A673 (cell line): ENCODE measurements at regions of chr12 and their contacts with region 1.

Region 1: GRCh38 chr12:50055831-50056638 is 1.4 kb upstream of the ASIC1 start:
- DNase-seq: peak; percentile 59
- H3K4me3 ChIP-seq: peak overlapping the region; percentile 71
- H3K27ac ChIP-seq: no peak overlapping the region
- H3K4me1 ChIP-seq: peaks cover 21% of the 10 kb centered on the region
- H3K27me3 ChIP-seq: peaks cover 4% of the 10 kb centered on the region
- CTCF ChIP-seq: peak; percentile 98

Region 2: DNA sequence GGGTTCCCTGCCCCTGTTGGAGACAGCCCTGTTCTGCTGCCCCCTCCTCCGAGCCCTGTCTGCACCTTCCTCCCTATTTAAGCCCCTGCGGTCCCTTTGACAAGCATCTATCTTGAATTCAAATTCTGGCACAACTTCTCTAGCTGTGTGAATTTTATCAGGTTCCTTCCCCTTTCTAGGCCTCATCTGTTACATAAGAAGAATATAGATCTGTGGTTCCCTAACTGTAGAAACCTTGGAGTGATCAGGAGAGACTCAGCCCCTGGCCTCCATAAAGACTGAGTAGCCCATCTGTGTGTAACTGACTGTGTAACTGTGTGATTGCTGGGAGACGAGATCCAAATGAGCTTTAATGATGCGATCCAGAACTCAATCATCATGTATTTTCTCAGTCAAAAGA is 17.7 kb before region 1 on chr12:
- CTCF ChIA-PET with region 1: interaction called, 17 read pairs
- POLR2A ChIA-PET with region 1: no interaction called
- intact Hi-C with region 1: loop called (anchors 1 kb)
- DNase-seq: no peak
- H3K4me3 ChIP-seq: no peak overlapping the region
- H3K27ac ChIP-seq: no peak overlapping the region
- H3K4me1 ChIP-seq: no peaks in the 10 kb centered on the region
- H3K27me3 ChIP-seq: no peaks in the 10 kb centered on the region
- CTCF ChIP-seq: no peak

Region 3: GRCh38 chr12:50043854-50044253 is 12.2 kb before region 1 on chr12:
- CTCF ChIA-PET with region 1: interaction called, 17 read pairs
- POLR2A ChIA-PET with region 1: no interaction called
- intact Hi-C with region 1: loop called (anchors 1 kb)
- DNase-seq: no peak
- H3K4me3 ChIP-seq: no peak overlapping the region
- H3K27ac ChIP-seq: no peak overlapping the region
- H3K4me1 ChIP-seq: no peaks in the 10 kb centered on the region
- H3K27me3 ChIP-seq: no peaks in the 10 kb centered on the region
- CTCF ChIP-seq: no peak